Endothelial cell of umbilical vein (primary cell): ENCODE measurements at regions of chr12 and their contacts with region 1.

Region 1: DNA sequence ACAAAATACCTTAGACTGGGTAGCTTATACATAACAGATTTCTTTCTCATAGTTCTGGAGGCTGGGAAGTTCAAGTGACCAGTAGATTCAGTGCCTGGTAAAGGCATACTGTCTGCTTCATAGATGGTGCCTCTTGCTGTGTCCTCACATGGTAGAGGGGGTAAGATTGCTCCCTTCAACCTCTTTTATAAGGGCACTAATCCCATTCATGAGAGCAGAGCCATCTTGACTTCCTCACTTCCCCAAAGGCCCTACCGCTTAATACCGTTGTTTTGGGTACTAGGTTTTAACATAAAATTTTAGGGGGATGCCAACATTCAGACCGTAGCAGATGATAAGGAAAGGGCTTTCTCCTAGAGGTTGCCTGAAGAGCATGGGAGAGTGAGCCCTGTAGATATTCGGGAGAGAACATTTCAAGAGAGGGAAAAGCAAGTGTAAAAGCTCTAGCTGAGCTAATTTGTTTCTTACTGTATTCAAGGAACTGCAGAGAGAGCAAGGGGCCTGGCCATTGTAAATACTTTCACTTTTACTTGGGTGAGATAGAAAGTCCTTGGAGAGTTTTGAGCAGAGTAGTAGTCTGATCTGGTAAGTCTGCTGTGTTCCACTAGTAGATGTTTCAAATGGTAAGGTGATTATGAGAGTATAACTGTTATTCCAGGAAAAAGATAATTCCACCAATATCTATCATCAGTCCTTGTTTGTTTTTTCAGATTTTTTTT is 27.3 kb downstream of the FRS2 start:
- DNase-seq: no peak
- H3K4me3 ChIP-seq: no peak overlapping the region
- H3K27ac ChIP-seq: no peak overlapping the region
- H3K4me1 ChIP-seq: no peaks in the 10 kb centered on the region
- H3K27me3 ChIP-seq: no peaks in the 10 kb centered on the region
- CTCF ChIP-seq: no peak
- POLR2A ChIP-seq: no peak

Region 2: GRCh38 chr12:69540987-69541386 is 43.5 kb after region 1 on chr12:
- CTCF ChIA-PET with region 1: no interaction called
- POLR2A ChIA-PET with region 1: no interaction called
- dilution Hi-C with region 1: no loop called
- intact Hi-C with region 1: loop called (anchors 2 kb)
- DNase-seq: no peak
- H3K4me3 ChIP-seq: no peak overlapping the region
- H3K27ac ChIP-seq: no peak overlapping the region
- H3K4me1 ChIP-seq: no peaks in the 10 kb centered on the region
- H3K27me3 ChIP-seq: no peaks in the 10 kb centered on the region
- CTCF ChIP-seq: no peak
- POLR2A ChIP-seq: no peak